ENCODE measurements at regions of chr2 and their contacts with region 1.

Region 1: GRCh38 chr2:101252408-101253012 is at the start of gene CNOT11:
- H3K4me3 ChIP-seq: peak within 1 kb of the TSS; percentile 98
- H3K27ac ChIP-seq: peak within 1 kb of the TSS; percentile 87
- H3K4me1 ChIP-seq: 0 out of 2 replicates have a peak, but pooled peaks cover 2% of the 10 kb centered on the region
- CTCF ChIP-seq: no peak

Region 2: DNA sequence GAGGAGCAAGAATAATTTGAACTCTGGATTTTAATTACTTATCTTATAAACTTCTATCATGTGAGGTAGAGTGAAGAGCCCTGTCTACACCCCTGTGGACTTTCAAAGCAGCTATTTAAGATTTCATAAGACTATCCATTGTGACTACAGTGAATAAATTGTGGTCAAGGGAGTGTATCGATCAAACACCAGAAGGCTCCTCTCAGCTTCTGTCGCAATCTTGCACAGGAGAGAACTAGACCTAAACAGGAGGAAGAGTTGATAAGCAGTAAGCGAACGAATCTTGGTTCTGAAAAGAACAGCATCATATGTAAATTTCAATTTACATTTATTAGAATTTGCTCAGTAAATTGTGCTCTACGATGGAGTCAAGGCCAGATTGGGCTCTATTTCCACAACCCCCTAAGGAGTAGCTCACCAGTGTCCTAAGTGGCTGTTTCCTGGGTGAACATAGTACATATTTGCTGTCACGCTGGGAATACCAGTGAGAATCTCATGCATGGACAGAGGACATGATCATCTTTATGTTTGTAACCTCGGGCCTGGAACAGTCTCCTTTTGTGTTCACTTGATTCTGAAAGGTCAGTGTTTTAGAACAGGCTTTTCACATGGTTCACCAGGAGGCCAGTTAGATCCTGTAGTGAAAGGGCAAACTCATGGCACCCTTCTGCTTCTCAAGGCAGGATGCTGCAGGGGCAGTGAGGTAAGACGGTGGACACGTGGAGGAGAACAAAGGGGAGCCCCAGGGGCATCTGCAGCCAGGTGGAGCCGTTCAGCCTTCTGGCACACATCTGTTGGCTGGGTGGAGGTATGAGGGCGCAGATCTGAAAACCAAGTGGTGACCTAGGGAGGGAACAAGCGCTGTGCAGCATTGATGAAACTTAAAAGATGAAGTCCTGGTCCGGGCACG is 399.3 kb before region 1 on chr2:
- CTCF ChIA-PET with region 1: no interaction called
- POLR2A ChIA-PET with region 1: no interaction called
- H3K4me3 ChIP-seq: no peak overlapping the region
- H3K27ac ChIP-seq: no peak overlapping the region
- H3K4me1 ChIP-seq: no peaks in the 10 kb centered on the region
- CTCF ChIP-seq: peak; percentile 13; the same call in 1 of the 2 replicates

Region 3: GRCh38 chr2:101238930-101239759 is 13.4 kb before region 1 on chr2:
- CTCF ChIA-PET with region 1: interaction called, 24 read pairs
- POLR2A ChIA-PET with region 1: interaction called, 4 read pairs
- H3K4me3 ChIP-seq: no peak overlapping the region
- H3K27ac ChIP-seq: no peak overlapping the region
- H3K4me1 ChIP-seq: no peaks in the 10 kb centered on the region
- CTCF ChIP-seq: no peak

Region 4: GRCh38 chr2:101277113-101277512 is 24.6 kb after region 1 on chr2:
- CTCF ChIA-PET with region 1: no interaction called
- POLR2A ChIA-PET with region 1: no interaction called
- H3K4me3 ChIP-seq: no peak overlapping the region
- H3K27ac ChIP-seq: no peak overlapping the region
- H3K4me1 ChIP-seq: no peaks in the 10 kb centered on the region
- CTCF ChIP-seq: no peak